ENCODE measurements at regions of chr12 and their contacts with region 1.

Region 1: DNA sequence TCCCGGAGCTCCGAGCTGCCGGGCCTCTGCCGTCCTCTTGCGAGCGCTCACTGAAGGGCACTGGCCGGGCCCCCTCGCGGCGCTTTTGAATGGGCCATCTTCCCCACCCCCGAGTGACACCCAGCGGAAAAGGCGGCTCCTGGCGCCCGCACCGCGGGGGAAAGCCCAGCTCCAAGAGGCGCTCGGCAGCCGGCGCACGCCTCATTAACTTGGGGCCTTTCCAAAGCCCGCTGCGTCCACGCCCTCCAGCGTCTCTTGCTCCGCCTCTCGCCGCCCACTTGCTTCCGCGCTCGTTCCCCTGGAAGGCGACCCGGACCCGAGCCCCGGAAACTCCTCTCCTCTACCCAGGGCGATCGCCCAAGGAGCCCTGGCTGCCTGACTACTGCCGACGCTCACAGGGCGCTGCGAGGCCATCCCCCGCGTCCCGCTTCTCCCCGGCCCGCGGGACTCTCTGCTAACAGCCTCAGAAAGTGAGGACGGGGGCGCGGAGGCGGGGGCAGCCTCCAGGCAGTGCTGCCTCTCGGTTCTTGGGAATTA is at the start of gene PHLDA1:
- DNase-seq: peak; percentile 97 to 98
- ATAC-seq: peak; percentile 95
- H3K4me3 ChIP-seq: peak within 1 kb of the TSS; percentile 7 to 73
- H3K27ac ChIP-seq: peak within 1 kb of the TSS; percentile 55 to 87
- H3K4me1 ChIP-seq: no peaks in the 10 kb centered on the region
- H3K27me3 ChIP-seq: no peaks in the 10 kb centered on the region
- total RNA-seq, gene PHLDA1: 16.6 to 25.9 TPM

Region 2: GRCh38 chr12:75334384-75335030 is 697.1 kb before region 1 on chr12 and contains the start of gene GLIPR1L1:
- intact Hi-C with region 1: loop called in 1 of 2 experiments (anchors 10 kb)
- DNase-seq: peak; percentile 91 to 93
- ATAC-seq: peak; percentile 92
- H3K4me3 ChIP-seq: peak within 1 kb of the TSS; percentile 6 to 61
- H3K27ac ChIP-seq: peak within 1 kb of the TSS in 1 of 2 donors; percentile 10
- H3K4me1 ChIP-seq: no peaks in the 10 kb centered on the region
- H3K27me3 ChIP-seq: no peaks in the 10 kb centered on the region
- total RNA-seq, gene GLIPR1L1: not detected

Region 3: GRCh38 chr12:75553398-75553797 is 478.2 kb before region 1 on chr12:
- intact Hi-C with region 1: loop called in 1 of 2 experiments (anchors 10 kb)
- DNase-seq: no peak
- ATAC-seq: no peak
- H3K4me3 ChIP-seq: no peak overlapping the region
- H3K27ac ChIP-seq: peak overlapping the region in 1 of 2 donors; percentile 25
- H3K4me1 ChIP-seq: peaks cover 0 to 2% of the 10 kb centered on the region in 2 donors
- H3K27me3 ChIP-seq: no peaks in the 10 kb centered on the region

Region 4: DNA sequence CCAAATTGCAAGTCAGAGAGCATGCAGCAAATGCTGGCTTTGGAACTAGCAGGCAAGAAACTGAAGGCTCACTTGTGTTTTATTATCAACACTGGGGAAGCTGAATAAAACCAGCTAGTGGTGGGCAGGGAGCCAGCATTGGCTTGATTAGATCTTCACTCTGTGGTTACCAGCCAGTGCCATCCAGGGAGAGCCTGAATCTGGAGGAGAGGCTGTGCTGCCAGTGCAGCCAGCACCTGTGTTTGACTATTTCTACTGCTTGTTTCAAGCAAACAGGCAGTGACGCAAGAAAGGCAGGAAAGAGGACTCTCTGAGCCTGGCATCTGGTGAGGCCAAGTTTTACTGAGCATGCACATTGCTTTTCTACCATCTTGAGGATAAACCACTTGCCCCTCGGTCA is 247.0 kb before region 1 on chr12:
- intact Hi-C with region 1: loop called in 1 of 2 experiments (anchors 10 kb)
- DNase-seq: no peak
- ATAC-seq: no peak
- H3K4me3 ChIP-seq: no peak overlapping the region
- H3K27ac ChIP-seq: peak overlapping the region; percentile 56 to 98
- H3K4me1 ChIP-seq: peaks cover 5 to 7% of the 10 kb centered on the region in 2 donors
- H3K27me3 ChIP-seq: no peaks in the 10 kb centered on the region

Region 5: DNA sequence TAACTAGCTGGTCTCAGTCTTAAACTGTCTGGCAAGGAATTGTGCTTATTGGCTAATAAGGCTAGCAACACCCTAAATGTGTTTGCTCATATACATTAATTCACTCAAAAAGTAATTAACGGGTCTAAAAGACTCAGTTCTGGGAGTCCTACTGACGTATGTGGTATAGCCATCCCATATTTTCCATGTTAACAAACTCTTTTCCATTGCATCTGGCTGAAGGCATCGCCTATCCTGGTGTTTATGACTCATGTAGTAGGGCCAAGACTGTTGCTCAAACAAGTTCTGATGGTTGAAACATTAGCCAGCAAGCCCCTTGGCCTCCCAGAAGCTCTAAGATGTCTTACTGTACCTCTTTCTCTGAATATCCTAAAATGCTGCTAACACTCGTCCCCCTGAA is 98.5 kb before region 1 on chr12:
- intact Hi-C with region 1: loop called in 1 of 2 experiments (anchors 2 kb)
- DNase-seq: no peak
- ATAC-seq: peak; percentile 20
- H3K4me3 ChIP-seq: no peak overlapping the region
- H3K27ac ChIP-seq: no peak overlapping the region
- H3K4me1 ChIP-seq: peaks cover 0 to 3% of the 10 kb centered on the region in 2 donors
- H3K27me3 ChIP-seq: no peaks in the 10 kb centered on the region

Region 6: DNA sequence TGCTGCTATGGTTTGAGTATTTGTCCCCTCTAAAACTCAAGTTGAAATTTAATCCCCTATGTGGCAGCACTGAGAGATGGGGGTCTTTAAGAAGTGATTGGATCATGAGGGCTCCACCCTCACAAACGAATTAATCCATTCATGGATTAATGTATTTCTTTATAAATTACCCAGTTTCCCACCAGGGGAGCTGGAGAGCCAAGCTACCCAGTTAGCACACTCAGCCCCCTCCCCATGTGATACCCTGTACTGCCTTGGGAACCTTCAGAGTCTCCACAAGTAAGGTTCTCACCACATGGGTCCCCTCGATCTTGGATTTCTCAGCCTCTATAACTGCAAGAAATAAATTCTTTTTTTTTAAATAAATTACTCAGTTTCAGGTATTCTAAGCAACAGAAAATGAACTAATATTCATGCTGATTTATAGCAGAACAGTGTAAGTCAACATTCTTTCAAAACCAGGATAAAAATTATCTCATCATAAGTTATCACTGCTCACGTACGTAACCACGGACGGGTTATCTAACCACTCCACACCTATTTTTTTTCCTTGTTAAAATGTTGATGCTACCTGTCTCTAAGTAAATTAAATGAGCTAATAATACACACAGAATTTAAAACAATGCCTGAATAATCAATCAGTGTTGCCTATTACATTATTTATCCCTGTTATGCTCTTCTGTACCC is 49.3 kb after region 1 on chr12:
- intact Hi-C with region 1: no loop called
- DNase-seq: no peak
- ATAC-seq: no peak
- H3K4me3 ChIP-seq: no peak overlapping the region
- H3K27ac ChIP-seq: no peak overlapping the region
- H3K4me1 ChIP-seq: no peaks in the 10 kb centered on the region
- H3K27me3 ChIP-seq: no peaks in the 10 kb centered on the region

Region 7: GRCh38 chr12:76247026-76247646 is 215.5 kb after region 1 on chr12:
- intact Hi-C with region 1: no loop called
- DNase-seq: no peak
- ATAC-seq: no peak
- H3K4me3 ChIP-seq: no peak overlapping the region
- H3K27ac ChIP-seq: no peak overlapping the region
- H3K4me1 ChIP-seq: no peaks in the 10 kb centered on the region
- H3K27me3 ChIP-seq: no peaks in the 10 kb centered on the region

Region 8: GRCh38 chr12:76462668-76463224 is 431.1 kb after region 1 on chr12:
- intact Hi-C with region 1: no loop called
- DNase-seq: no peak
- ATAC-seq: no peak
- H3K4me3 ChIP-seq: no peak overlapping the region
- H3K27ac ChIP-seq: no peak overlapping the region
- H3K4me1 ChIP-seq: no peaks in the 10 kb centered on the region
- H3K27me3 ChIP-seq: no peaks in the 10 kb centered on the region